Prostate gland (tissue), 2 donors: ENCODE measurements at regions of chr15 and their contacts with region 1.

Region 1: GRCh38 chr15:73051811-73052678 is at the start of gene NEO1:
- DNase-seq: peak; percentile 88
- H3K4me3 ChIP-seq: peak within 1 kb of the TSS; percentile 67 to 86
- H3K27ac ChIP-seq: peak within 1 kb of the TSS; percentile 91 to 96
- H3K4me1 ChIP-seq: peaks cover 5% of the 10 kb centered on the region
- H3K27me3 ChIP-seq: no peaks in the 10 kb centered on the region
- CTCF ChIP-seq: no peak
- POLR2A ChIP-seq: peak; percentile 60
- total RNA-seq, gene NEO1: 75.0 to 80.7 TPM

Region 2: DNA sequence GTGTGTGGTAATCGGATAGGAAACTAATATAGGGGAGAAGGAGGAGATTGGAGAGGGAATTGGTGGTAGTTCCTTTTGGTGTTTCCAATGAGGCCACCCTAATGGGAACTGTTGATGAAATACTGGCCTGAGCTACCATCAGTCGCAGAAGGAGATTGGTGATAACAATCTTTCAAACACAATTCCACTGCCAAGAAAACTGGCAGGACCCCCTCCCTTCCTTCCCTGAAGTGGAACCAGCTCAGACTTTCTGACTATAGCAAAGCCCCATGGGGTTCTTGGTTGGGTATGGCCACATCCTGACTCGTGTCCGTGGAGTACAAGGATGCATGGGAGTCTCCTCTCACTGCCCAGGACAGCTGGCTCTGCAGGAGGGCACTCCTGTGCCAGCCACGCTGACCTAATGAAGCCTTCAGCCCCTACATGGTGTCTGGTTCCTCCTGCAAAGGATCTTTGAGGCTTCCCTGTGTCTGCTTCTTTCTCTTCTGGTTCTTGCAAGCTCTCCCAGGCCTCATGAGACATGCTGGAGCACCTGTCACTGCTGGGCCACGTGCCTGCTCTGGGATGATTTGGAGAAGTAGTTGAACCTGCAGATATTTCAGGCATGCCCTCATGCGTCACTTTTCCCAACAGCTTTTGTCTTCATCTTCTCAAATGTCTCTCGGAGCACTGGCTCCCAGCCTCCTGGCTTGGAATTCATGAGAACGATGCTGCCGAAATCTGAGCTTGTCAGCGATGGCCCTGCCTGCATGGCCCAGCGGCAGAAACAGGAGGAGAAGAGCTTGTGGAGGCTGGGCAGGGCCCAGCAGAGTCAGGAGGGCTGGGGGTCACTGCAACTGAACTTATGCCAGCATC is 178.4 kb before region 1 on chr15:
- intact Hi-C with region 1: loop called (anchors 10 kb)
- DNase-seq: no peak
- H3K4me3 ChIP-seq: no peak overlapping the region
- H3K27ac ChIP-seq: peak overlapping the region; percentile 8 to 18
- H3K4me1 ChIP-seq: no peaks in the 10 kb centered on the region
- H3K27me3 ChIP-seq: no peaks in the 10 kb centered on the region
- CTCF ChIP-seq: no peak
- POLR2A ChIP-seq: no peak

Region 3: GRCh38 chr15:72994534-72995177 is 57.4 kb before region 1 on chr15:
- intact Hi-C with region 1: loop called (anchors 5 kb)
- DNase-seq: no peak
- H3K4me3 ChIP-seq: no peak overlapping the region
- H3K27ac ChIP-seq: no peak overlapping the region
- H3K4me1 ChIP-seq: no peaks in the 10 kb centered on the region
- H3K27me3 ChIP-seq: no peaks in the 10 kb centered on the region
- CTCF ChIP-seq: no peak
- POLR2A ChIP-seq: no peak

Region 4: GRCh38 chr15:73081321-73081958 is 29.4 kb after region 1 on chr15:
- intact Hi-C with region 1: no loop called
- DNase-seq: peak; percentile 54
- H3K4me3 ChIP-seq: no peak overlapping the region
- H3K27ac ChIP-seq: no peak overlapping the region
- H3K4me1 ChIP-seq: peaks cover 11% of the 10 kb centered on the region
- H3K27me3 ChIP-seq: no peaks in the 10 kb centered on the region
- CTCF ChIP-seq: peak; percentile 33 to 80 (median 64)
- POLR2A ChIP-seq: no peak

Region 5: GRCh38 chr15:73119478-73119877 is 67.4 kb after region 1 on chr15:
- intact Hi-C with region 1: no loop called
- DNase-seq: no peak
- H3K4me3 ChIP-seq: no peak overlapping the region
- H3K27ac ChIP-seq: no peak overlapping the region
- H3K4me1 ChIP-seq: no peaks in the 10 kb centered on the region
- H3K27me3 ChIP-seq: no peaks in the 10 kb centered on the region
- CTCF ChIP-seq: no peak
- POLR2A ChIP-seq: no peak

Region 6: GRCh38 chr15:73130830-73131229 is 78.8 kb after region 1 on chr15:
- intact Hi-C with region 1: no loop called
- DNase-seq: no peak
- H3K4me3 ChIP-seq: no peak overlapping the region
- H3K27ac ChIP-seq: no peak overlapping the region
- H3K4me1 ChIP-seq: no peaks in the 10 kb centered on the region
- H3K27me3 ChIP-seq: no peaks in the 10 kb centered on the region
- CTCF ChIP-seq: no peak
- POLR2A ChIP-seq: no peak

Region 7: GRCh38 chr15:73231661-73232419 is 179.8 kb after region 1 on chr15:
- intact Hi-C with region 1: no loop called
- DNase-seq: no peak
- H3K4me3 ChIP-seq: no peak overlapping the region
- H3K27ac ChIP-seq: no peak overlapping the region
- H3K4me1 ChIP-seq: no peaks in the 10 kb centered on the region
- H3K27me3 ChIP-seq: no peaks in the 10 kb centered on the region
- CTCF ChIP-seq: no peak
- POLR2A ChIP-seq: no peak